Ovary (tissue), 10 donors: ENCODE measurements at regions of chr16 and their contacts with region 1.

Region 1: GRCh38 chr16:27511657-27512448 is 37.9 kb downstream of the GTF3C1 start:
- DNase-seq: no peak
- H3K4me3 ChIP-seq: no peak overlapping the region
- H3K27ac ChIP-seq: no peak overlapping the region
- H3K4me1 ChIP-seq: no peaks in the 10 kb centered on the region
- H3K27me3 ChIP-seq: no peaks in the 10 kb centered on the region
- CTCF ChIP-seq: no peak
- EP300 ChIP-seq: no peak
- POLR2A ChIP-seq: no peak

Region 2: DNA sequence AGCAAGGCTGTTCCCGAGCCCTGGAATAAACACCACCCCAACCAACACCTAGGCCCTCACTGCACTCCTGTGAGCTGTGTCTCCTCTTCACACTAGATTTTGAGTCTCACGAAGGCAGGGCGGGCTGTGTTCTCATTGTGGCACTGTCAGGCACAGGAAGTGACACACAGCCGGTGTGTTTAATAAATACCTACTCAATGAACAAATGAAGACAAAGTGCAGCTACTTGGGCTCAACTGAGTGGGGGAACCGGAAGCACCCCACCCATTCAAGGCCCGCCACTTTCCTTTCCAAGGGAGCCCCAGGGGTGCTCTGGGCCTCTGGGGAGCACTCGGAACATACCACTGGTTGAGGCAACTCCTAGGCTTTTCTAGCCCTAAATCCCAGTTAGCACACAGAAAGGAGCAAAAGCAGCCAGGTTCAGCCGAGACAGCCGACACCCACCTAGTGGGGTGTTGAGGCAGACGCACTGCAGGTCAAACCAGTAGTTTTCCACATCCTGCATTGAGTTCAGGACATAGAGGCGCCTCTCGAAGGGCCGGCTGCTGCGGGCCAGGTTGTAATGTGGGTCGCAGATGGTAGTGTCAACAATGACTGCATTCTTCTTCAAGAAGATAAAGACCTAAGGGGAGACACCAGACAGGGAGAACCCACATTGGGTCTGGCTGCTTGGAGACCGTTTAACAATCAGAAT is 19.8 kb before region 1 on chr16:
- intact Hi-C with region 1: loop called in 1 of 4 experiments (anchors 2 kb)
- DNase-seq: no peak
- H3K4me3 ChIP-seq: no peak overlapping the region
- H3K27ac ChIP-seq: no peak overlapping the region
- H3K4me1 ChIP-seq: peaks cover 2% of the 10 kb centered on the region
- H3K27me3 ChIP-seq: no peaks in the 10 kb centered on the region
- CTCF ChIP-seq: no peak
- EP300 ChIP-seq: no peak
- POLR2A ChIP-seq: no peak